ENCODE measurements at regions of chrX and their contacts with region 1.

Region 1: GRCh38 chrX:45196701-45197100 is 4.0 kb downstream of the DIPK2B start:
- DNase-seq: peak; percentile 86
- H3K4me3 ChIP-seq: no peak overlapping the region
- H3K27ac ChIP-seq: peak overlapping the region; percentile 91
- H3K4me1 ChIP-seq: peaks cover 53% of the 10 kb centered on the region
- H3K27me3 ChIP-seq: no peaks in the 10 kb centered on the region
- CTCF ChIP-seq: no peak
- POLR2A ChIP-seq: no peak

Region 2: GRCh38 chrX:45186643-45187026 is 10.1 kb before region 1 on chrX:
- CTCF ChIA-PET with region 1: interaction called, 10 read pairs
- POLR2A ChIA-PET with region 1: interaction called, 3 read pairs
- dilution Hi-C with region 1: no loop called
- intact Hi-C with region 1: loop called (anchors 1 kb)
- DNase-seq: no peak
- H3K4me3 ChIP-seq: peak overlapping the region in 1 of 3 experiments; percentile 46
- H3K27ac ChIP-seq: no peak overlapping the region
- H3K4me1 ChIP-seq: peaks cover 9% of the 10 kb centered on the region
- H3K27me3 ChIP-seq: no peaks in the 10 kb centered on the region
- CTCF ChIP-seq: no peak
- POLR2A ChIP-seq: no peak

Region 3: GRCh38 chrX:45472968-45473367 is 276.3 kb after region 1 on chrX:
- CTCF ChIA-PET with region 1: no interaction called
- POLR2A ChIA-PET with region 1: no interaction called
- dilution Hi-C with region 1: no loop called
- intact Hi-C with region 1: loop called (anchors 2 kb)
- DNase-seq: peak; percentile 76
- H3K4me3 ChIP-seq: no peak overlapping the region
- H3K27ac ChIP-seq: peak overlapping the region; percentile 75
- H3K4me1 ChIP-seq: peaks cover 14% of the 10 kb centered on the region
- H3K27me3 ChIP-seq: no peaks in the 10 kb centered on the region
- CTCF ChIP-seq: no peak
- POLR2A ChIP-seq: no peak

Region 4: DNA sequence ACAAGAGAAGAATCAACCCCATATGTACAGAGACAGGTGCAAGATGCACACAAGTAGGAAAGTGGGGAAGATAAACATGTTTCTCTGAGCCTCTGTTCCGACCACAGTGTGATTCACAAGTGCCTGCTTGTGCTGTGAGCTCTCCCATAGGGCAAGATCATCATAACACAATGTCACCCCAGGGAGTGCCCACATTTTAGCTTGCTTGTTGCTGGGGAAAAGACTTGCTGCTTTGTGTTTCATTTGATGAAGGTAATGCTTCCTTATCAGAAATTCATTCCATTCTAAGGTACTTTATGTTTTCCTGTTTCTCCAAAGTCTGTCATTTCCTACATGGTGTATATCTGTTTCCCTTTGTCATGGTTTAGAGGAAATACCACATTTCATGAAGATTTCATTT is 308.5 kb after region 1 on chrX:
- CTCF ChIA-PET with region 1: interaction called, 3 read pairs
- POLR2A ChIA-PET with region 1: interaction called, 3 read pairs
- dilution Hi-C with region 1: no loop called
- intact Hi-C with region 1: loop called (anchors 1 kb)
- DNase-seq: peak; percentile 92
- H3K4me3 ChIP-seq: no peak overlapping the region
- H3K27ac ChIP-seq: peak overlapping the region; percentile 96
- H3K4me1 ChIP-seq: peaks cover 35% of the 10 kb centered on the region
- H3K27me3 ChIP-seq: no peaks in the 10 kb centered on the region
- CTCF ChIP-seq: no peak
- POLR2A ChIP-seq: peak; percentile 36

Region 5: DNA sequence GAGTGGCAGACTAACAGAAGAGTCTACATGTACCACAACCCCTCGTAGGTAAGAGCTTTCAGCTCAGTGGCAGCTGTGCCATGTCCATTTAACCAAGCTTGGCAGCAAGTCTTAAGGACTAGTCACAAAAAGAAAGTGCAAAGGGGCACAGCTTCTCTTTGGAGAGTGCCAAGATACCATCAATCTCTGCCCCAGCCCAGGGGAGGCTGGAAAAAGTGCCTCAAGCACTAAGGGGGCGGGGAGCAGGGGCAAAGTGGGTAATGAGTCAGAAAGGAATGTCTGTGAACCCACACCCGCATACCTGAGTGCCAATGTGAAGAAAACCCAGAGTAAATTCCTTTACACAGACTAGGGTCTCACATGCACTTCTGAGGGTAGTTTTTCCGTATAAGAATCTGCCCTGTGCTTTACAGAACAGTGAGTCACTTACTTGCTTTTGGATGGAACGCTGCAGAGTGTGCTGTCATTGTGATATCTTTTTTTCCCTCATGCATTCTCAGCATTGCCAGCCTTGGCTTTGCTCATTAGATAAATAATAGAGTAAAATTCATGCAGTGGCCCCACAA is 1128.7 kb after region 1 on chrX:
- CTCF ChIA-PET with region 1: no interaction called
- POLR2A ChIA-PET with region 1: no interaction called
- dilution Hi-C with region 1: no loop called
- intact Hi-C with region 1: loop called (anchors 2 kb)
- DNase-seq: peak; percentile 69
- H3K4me3 ChIP-seq: no peak overlapping the region
- H3K27ac ChIP-seq: peak overlapping the region; percentile 98
- H3K4me1 ChIP-seq: peaks cover 36% of the 10 kb centered on the region
- H3K27me3 ChIP-seq: no peaks in the 10 kb centered on the region
- CTCF ChIP-seq: no peak
- POLR2A ChIP-seq: no peak